ENCODE measurements at regions of chr10 and their contacts with region 1.

Region 1: DNA sequence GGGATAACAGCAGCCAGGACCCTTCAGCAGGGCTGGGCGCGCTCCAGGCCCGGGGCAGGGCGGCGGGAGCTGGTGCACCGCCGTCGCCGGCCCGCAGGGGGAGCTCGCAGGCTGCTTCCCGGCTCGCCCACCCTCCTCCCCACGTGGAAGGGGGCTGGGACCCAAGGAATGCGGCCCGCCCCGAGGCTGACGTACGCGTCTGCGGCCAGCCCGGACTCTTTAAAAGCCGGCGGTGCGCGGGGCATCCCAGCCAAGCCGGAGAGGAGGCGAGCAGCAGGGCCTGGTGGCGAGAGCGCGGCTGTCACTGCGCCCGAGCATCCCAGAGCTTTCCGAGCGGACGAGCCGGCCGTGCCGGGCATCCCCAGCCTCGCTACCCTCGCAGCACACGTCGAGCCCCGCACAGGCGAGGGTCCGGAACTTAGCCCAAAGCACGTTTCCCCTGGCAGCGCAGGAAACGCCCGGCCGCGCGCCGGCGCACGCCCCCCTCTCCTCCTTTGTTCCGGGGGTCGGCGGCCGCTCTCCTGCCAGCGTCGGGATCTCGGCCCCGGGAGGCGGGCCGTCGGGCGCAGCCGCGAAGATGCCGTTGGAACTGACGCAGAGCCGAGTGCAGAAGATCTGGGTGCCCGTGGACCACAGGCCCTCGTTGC is at the start of gene PFKFB3:
- DNase-seq: peak; percentile 84 to 90 (median 86)
- H3K4me3 ChIP-seq: peak within 1 kb of the TSS; percentile 77 to 84
- H3K4me3 Mint-ChIP-seq: peak within 1 kb of the TSS; percentile 95 to 99 (median 96)
- H3K27ac ChIP-seq: peak within 1 kb of the TSS; percentile 71
- H3K27ac Mint-ChIP-seq: peak within 1 kb of the TSS; percentile 94 to 97 (median 96)
- H3K4me1 ChIP-seq: peaks cover 23% of the 10 kb centered on the region
- H3K4me1 Mint-ChIP-seq: peaks cover 22 to 51% (median 27%) of the 10 kb centered on the region in 4 donors
- H3K27me3 ChIP-seq: no peaks in the 10 kb centered on the region
- H3K27me3 Mint-ChIP-seq: no peaks in the 10 kb centered on the region
- total RNA-seq, gene PFKFB3: 55.7 to 67.1 TPM

Region 2: DNA sequence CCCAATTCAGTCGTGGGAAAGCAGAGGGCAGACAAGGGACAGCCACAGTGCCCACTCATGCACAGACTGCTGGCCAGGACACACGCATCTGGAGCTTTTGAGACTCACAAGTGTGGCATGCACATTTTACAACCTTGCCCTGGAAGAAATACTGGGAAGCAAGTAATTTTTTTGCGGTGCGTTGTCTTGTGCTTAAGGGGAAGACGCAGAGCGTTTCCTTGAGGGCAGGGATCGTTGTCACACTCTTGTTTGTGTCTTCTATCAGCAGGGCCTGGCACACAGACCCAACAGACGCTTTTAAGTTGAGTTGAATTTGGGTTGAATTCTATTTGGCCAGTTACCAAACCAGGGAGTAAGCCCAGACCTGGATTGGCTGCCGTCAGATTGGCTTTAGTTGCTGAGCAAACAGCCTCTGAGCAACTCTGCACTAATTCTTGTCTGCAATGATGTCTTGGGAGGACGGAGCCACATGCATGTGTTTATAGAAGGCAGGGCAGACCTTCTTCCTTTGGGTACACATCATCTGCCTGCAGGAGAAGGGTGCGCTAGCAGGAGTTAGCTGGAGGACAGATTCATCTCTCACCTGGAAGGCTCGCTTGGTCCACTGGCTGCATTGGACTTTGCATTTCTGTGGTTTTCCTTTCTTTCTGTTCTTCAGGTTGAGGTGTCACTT is 179.0 kb before region 1 on chr10:
- CTCF ChIA-PET with region 1: no interaction called
- POLR2A ChIA-PET with region 1: no interaction called
- intact Hi-C with region 1: no loop called
- DNase-seq: no peak
- H3K4me3 ChIP-seq: no peak overlapping the region
- H3K4me3 Mint-ChIP-seq: no peak overlapping the region
- H3K27ac ChIP-seq: no peak overlapping the region
- H3K27ac Mint-ChIP-seq: no peak overlapping the region
- H3K4me1 ChIP-seq: peaks cover 12% of the 10 kb centered on the region
- H3K4me1 Mint-ChIP-seq: peaks cover 20 to 34% (median 27%) of the 10 kb centered on the region in 4 donors
- H3K27me3 ChIP-seq: no peaks in the 10 kb centered on the region
- H3K27me3 Mint-ChIP-seq: no peaks in the 10 kb centered on the region

Region 3: DNA sequence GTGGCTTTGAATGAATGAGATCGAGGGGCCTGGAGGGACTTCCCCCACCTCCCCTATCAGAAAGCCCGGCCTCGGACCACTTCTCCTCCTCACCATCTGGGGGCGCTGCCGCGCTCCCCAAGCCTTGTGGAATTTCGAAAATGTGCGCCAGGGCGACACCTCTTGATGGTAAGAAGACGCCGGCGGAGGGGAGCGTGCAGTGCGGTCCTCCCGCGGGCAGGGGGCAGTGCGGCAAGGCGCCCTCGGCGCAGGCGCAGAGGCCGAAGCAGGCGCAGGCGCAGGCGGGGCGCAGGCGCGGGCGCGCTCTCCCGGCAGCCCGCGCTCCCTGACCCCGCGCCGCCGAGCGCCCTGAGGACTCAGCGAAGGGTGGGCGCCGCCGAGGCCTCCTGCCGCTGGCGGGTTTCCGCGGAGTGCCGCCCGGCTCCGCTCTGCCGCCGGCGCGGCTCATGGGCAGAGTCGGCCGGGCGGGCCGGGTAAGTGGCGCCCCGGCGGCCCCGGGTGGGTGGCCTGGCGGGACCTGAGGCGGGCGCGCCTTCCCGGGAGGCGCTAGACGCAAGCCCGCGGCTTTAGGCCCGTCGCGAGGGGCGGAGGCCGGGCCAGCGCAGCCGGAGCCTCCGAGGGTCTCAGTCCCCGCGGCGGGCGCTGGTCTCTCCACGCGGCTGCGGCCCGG is 114.0 kb before region 1 on chr10 and contains the start of gene RBM17:
- CTCF ChIA-PET with region 1: interaction called, 11 read pairs
- POLR2A ChIA-PET with region 1: interaction called, 7 read pairs
- intact Hi-C with region 1: loop called (anchors 5 kb)
- DNase-seq: peak; percentile 95 to 100 (median 98)
- H3K4me3 ChIP-seq: peak within 1 kb of the TSS; percentile 68 to 94
- H3K4me3 Mint-ChIP-seq: peak within 1 kb of the TSS; percentile 85 to 99 (median 91)
- H3K27ac ChIP-seq: peak within 1 kb of the TSS; percentile 80
- H3K27ac Mint-ChIP-seq: peak within 1 kb of the TSS; percentile 75 to 96 (median 91)
- H3K4me1 ChIP-seq: peaks cover 57% of the 10 kb centered on the region
- H3K4me1 Mint-ChIP-seq: peaks cover 38 to 70% (median 53%) of the 10 kb centered on the region in 4 donors
- H3K27me3 ChIP-seq: no peaks in the 10 kb centered on the region
- H3K27me3 Mint-ChIP-seq: no peaks in the 10 kb centered on the region
- total RNA-seq, gene RBM17: 117 to 125 TPM

Region 4: DNA sequence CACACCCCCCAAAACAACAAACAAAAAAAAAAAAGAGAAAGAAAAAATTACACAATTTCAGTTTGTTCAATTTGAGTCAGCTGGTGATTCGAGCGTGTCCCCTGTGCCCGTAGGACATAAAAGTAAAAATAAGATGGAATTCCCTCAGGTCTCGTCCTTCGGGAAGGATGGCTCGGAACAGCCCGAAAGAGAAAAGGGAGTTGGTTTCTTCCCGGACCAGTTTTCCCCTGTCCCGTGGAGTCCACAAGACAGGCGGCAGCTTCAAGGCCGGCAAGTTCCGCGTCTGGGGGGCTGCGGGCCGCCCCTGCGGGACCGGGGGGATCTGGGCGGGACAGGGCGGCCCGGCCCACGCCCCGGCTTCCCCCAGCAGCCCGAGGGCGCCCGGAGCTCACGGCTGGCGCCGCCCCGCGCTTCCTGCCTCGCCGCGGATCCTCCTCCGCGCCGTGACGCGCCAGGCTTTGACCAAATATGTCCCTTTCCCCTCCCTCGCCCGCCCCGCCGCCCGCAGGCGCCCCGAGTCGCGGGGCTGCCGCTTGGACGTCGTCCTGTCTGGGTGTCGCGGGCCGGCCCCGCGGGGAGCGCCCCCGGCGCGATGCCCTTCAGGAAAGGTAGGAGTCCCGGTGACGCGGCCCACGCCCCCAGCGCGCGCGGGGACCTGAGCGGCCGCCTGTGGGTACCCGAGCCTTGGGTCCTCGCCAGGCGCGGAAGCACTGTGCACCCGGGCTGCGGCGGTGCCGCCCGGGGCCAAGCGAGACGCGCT is 58.2 kb before region 1 on chr10:
- CTCF ChIA-PET with region 1: interaction called, 10 read pairs
- POLR2A ChIA-PET with region 1: interaction called, 17 read pairs
- intact Hi-C with region 1: loop called (anchors 2 kb)
- DNase-seq: peak; percentile 85 to 92 (median 87)
- H3K4me3 ChIP-seq: peak overlapping the region; percentile 61 to 85
- H3K4me3 Mint-ChIP-seq: peak overlapping the region; percentile 88 to 95 (median 91)
- H3K27ac ChIP-seq: peak overlapping the region; percentile 84
- H3K27ac Mint-ChIP-seq: peak overlapping the region; percentile 89 to 97 (median 92)
- H3K4me1 ChIP-seq: peaks cover 77% of the 10 kb centered on the region
- H3K4me1 Mint-ChIP-seq: peaks cover 45 to 85% (median 64%) of the 10 kb centered on the region in 4 donors
- H3K27me3 ChIP-seq: no peaks in the 10 kb centered on the region
- H3K27me3 Mint-ChIP-seq: no peaks in the 10 kb centered on the region

Region 5: GRCh38 chr10:6171881-6172695 is 30.7 kb before region 1 on chr10:
- CTCF ChIA-PET with region 1: interaction called, 94 read pairs
- POLR2A ChIA-PET with region 1: interaction called, 62 read pairs
- intact Hi-C with region 1: loop called (anchors 1 kb)
- DNase-seq: no peak
- H3K4me3 ChIP-seq: no peak overlapping the region
- H3K4me3 Mint-ChIP-seq: peak overlapping the region in 4 of 8 donors; percentile 29 to 79 (median 62)
- H3K27ac ChIP-seq: no peak overlapping the region
- H3K27ac Mint-ChIP-seq: peak overlapping the region in 6 of 7 donors; percentile 22 to 74 (median 58)
- H3K4me1 ChIP-seq: peaks cover 77% of the 10 kb centered on the region
- H3K4me1 Mint-ChIP-seq: peaks cover 50 to 94% (median 72%) of the 10 kb centered on the region in 4 donors
- H3K27me3 ChIP-seq: no peaks in the 10 kb centered on the region
- H3K27me3 Mint-ChIP-seq: no peaks in the 10 kb centered on the region

Region 6: DNA sequence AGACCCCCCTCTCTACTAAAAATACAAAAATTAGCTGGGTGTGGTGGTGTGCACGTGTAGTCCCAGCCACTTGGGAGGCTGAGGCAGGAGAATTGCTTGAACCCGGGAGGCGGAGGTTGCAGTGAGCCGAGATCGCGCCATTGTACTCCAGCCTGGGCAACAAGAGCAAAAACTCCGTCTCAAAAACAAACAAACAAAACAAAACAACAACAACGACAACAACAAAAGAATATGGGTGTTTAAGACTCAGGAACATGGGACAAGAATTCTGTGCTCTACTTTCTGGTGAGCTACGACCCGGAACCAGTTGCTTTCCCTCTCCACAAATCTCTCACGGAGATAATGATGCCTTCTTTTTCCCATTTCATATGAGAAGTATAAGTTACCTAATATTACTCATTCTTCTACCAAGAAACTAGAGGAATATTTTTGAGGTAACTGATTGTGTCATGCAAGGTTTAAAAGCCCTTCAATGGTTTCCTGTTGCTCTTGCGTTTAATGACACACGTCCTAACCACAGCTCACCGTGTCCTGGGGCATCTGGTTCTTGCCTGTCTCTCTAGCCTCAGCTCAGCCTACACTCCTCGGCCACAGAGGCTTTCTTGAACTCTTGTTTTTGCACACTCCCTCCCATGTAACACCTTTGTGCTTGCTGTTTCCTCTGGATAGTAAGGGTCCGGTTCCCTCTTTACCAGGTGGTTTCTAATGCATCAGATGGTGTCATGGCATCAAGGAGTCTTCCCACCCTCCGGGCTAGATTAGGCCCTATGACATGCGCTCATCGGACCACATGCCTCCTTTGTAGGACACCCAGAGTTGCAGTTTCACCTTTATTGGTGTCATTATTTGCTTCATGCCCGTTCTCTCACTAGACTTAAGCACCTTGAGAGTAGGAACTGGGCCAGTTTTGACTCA is 67.4 kb after region 1 on chr10:
- CTCF ChIA-PET with region 1: interaction called, 12 read pairs
- POLR2A ChIA-PET with region 1: interaction called, 8 read pairs
- intact Hi-C with region 1: loop called (anchors 2 kb)
- DNase-seq: peak; percentile 77 to 90 (median 82)
- H3K4me3 ChIP-seq: no peak overlapping the region
- H3K4me3 Mint-ChIP-seq: peak overlapping the region in 7 of 8 donors; percentile 53 to 75 (median 63)
- H3K27ac ChIP-seq: peak overlapping the region; percentile 58
- H3K27ac Mint-ChIP-seq: peak overlapping the region; percentile 96 to 99 (median 97)
- H3K4me1 ChIP-seq: peaks cover 38% of the 10 kb centered on the region
- H3K4me1 Mint-ChIP-seq: peaks cover 35 to 51% (median 44%) of the 10 kb centered on the region in 4 donors
- H3K27me3 ChIP-seq: no peaks in the 10 kb centered on the region
- H3K27me3 Mint-ChIP-seq: no peaks in the 10 kb centered on the region

Region 7: GRCh38 chr10:6382081-6382480 is 179.3 kb after region 1 on chr10:
- CTCF ChIA-PET with region 1: interaction called, 10 read pairs
- POLR2A ChIA-PET with region 1: interaction called, 10 read pairs
- intact Hi-C with region 1: no loop called
- DNase-seq: peak in 4 of 5 donors; percentile 17 to 27 (median 20)
- H3K4me3 ChIP-seq: no peak overlapping the region
- H3K4me3 Mint-ChIP-seq: peak overlapping the region; percentile 46 to 78 (median 66)
- H3K27ac ChIP-seq: no peak overlapping the region
- H3K27ac Mint-ChIP-seq: peak overlapping the region in 3 of 7 donors; percentile 68 to 77 (median 69)
- H3K4me1 ChIP-seq: peaks cover 13% of the 10 kb centered on the region
- H3K4me1 Mint-ChIP-seq: peaks cover 12 to 20% (median 14%) of the 10 kb centered on the region in 4 donors
- H3K27me3 ChIP-seq: no peaks in the 10 kb centered on the region
- H3K27me3 Mint-ChIP-seq: no peaks in the 10 kb centered on the region

Region 8: GRCh38 chr10:6678211-6678803 is 475.5 kb after region 1 on chr10:
- CTCF ChIA-PET with region 1: interaction called, 3 read pairs
- POLR2A ChIA-PET with region 1: no interaction called
- intact Hi-C with region 1: loop called (anchors 5 kb)
- DNase-seq: peak; percentile 53 to 59 (median 55)
- H3K4me3 ChIP-seq: no peak overlapping the region
- H3K4me3 Mint-ChIP-seq: no peak overlapping the region
- H3K27ac ChIP-seq: no peak overlapping the region
- H3K27ac Mint-ChIP-seq: peak overlapping the region in 1 of 7 donors; percentile 52
- H3K4me1 ChIP-seq: no peaks in the 10 kb centered on the region
- H3K4me1 Mint-ChIP-seq: peaks cover 0 to 6% (median 5%) of the 10 kb centered on the region in 4 donors
- H3K27me3 ChIP-seq: peaks cover 3% of the 10 kb centered on the region
- H3K27me3 Mint-ChIP-seq: peaks cover 4 to 9% of the 10 kb centered on the region in 2 donors

Measured in CD4-positive, alpha-beta memory T cell (primary cell).